Mammary epithelial cell (primary cell): ENCODE measurements at regions of chr12 and their contacts with region 1.

Region 1: DNA sequence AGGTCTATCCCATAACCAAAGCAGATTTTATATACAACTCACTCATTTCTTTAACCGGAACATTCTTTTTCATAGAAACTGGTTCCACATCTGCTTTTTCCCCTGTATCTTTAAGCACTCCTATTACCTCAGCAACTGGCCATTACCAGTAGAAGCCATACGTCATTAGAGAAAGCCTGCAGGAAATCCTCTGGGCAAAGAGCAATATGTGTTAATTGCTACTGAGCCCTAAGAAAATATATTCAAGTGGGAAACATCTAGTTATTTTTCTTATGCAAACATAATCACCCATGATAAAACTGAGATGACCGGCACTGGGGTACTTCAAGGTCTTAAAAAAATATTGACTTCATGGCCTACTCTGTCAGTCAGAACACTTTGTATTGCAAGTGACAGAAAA is 28.2 kb upstream of the CPSF6 start:
- DNase-seq: no peak
- H3K4me3 ChIP-seq: no peak overlapping the region
- H3K27ac ChIP-seq: no peak overlapping the region
- H3K4me1 ChIP-seq: no peaks in the 10 kb centered on the region
- H3K27me3 ChIP-seq: no peaks in the 10 kb centered on the region
- CTCF ChIP-seq: no peak

Region 2: GRCh38 chr12:69179786-69180185 is 31.4 kb before region 1 on chr12:
- CTCF ChIA-PET with region 1: no interaction called
- dilution Hi-C with region 1: loop called (anchors 5 kb)
- in situ Hi-C with region 1: no loop called
- intact Hi-C with region 1: no loop called
- DNase-seq: no peak
- H3K4me3 ChIP-seq: no peak overlapping the region
- H3K27ac ChIP-seq: no peak overlapping the region
- H3K4me1 ChIP-seq: no peaks in the 10 kb centered on the region
- H3K27me3 ChIP-seq: peaks cover 5% of the 10 kb centered on the region
- CTCF ChIP-seq: no peak

Region 3: GRCh38 chr12:69254046-69254445 is 42.9 kb after region 1 on chr12:
- CTCF ChIA-PET with region 1: no interaction called
- dilution Hi-C with region 1: no loop called
- in situ Hi-C with region 1: no loop called
- intact Hi-C with region 1: no loop called
- DNase-seq: peak; percentile 21
- H3K4me3 ChIP-seq: no peak overlapping the region
- H3K27ac ChIP-seq: no peak overlapping the region
- H3K4me1 ChIP-seq: no peaks in the 10 kb centered on the region
- H3K27me3 ChIP-seq: no peaks in the 10 kb centered on the region
- CTCF ChIP-seq: peak; percentile 56 to 59

Region 4: GRCh38 chr12:69366796-69367195 is 155.6 kb after region 1 on chr12:
- CTCF ChIA-PET with region 1: no interaction called
- dilution Hi-C with region 1: no loop called
- in situ Hi-C with region 1: no loop called
- intact Hi-C with region 1: no loop called
- DNase-seq: peak; percentile 76
- H3K4me3 ChIP-seq: no peak overlapping the region
- H3K27ac ChIP-seq: peak overlapping the region; percentile 25
- H3K4me1 ChIP-seq: peaks cover 4% of the 10 kb centered on the region
- H3K27me3 ChIP-seq: no peaks in the 10 kb centered on the region
- CTCF ChIP-seq: no peak